Activated CD4-positive, alpha-beta memory T cell treated with anti-CD3 and anti-CD28 coated beads, Interleukin-2, amount 10 ng/mL, durations not matched to agents 7 days and 5 days (primary cell): ENCODE measurements at regions of chr10 and their contacts with region 1.

Region 1: GRCh38 chr10:101840741-101841453 is 2.7 kb downstream of the KCNIP2 start:
- DNase-seq: peak; percentile 80
- H3K4me3 Mint-ChIP-seq: peak overlapping the region; percentile 78
- H3K27ac Mint-ChIP-seq: peak overlapping the region; percentile 38
- H3K4me1 Mint-ChIP-seq: peaks cover 42% of the 10 kb centered on the region
- H3K27me3 Mint-ChIP-seq: peaks cover 19% of the 10 kb centered on the region

Region 2: GRCh38 chr10:101830322-101831168 is 10.4 kb before region 1 on chr10:
- CTCF ChIA-PET with region 1: interaction called, 28 read pairs
- POLR2A ChIA-PET with region 1: interaction called, 5 read pairs
- DNase-seq: peak; percentile 90
- H3K4me3 Mint-ChIP-seq: peak overlapping the region; percentile 76
- H3K27ac Mint-ChIP-seq: peak overlapping the region; percentile 87
- H3K4me1 Mint-ChIP-seq: peaks cover 56% of the 10 kb centered on the region
- H3K27me3 Mint-ChIP-seq: no peaks in the 10 kb centered on the region

Region 3: GRCh38 chr10:101889256-101890210 is 48.6 kb after region 1 on chr10:
- CTCF ChIA-PET with region 1: interaction called, 55 read pairs
- POLR2A ChIA-PET with region 1: no interaction called
- DNase-seq: peak; percentile 74
- H3K4me3 Mint-ChIP-seq: no peak overlapping the region
- H3K27ac Mint-ChIP-seq: no peak overlapping the region
- H3K4me1 Mint-ChIP-seq: peaks cover 14% of the 10 kb centered on the region
- H3K27me3 Mint-ChIP-seq: no peaks in the 10 kb centered on the region

Region 4: DNA sequence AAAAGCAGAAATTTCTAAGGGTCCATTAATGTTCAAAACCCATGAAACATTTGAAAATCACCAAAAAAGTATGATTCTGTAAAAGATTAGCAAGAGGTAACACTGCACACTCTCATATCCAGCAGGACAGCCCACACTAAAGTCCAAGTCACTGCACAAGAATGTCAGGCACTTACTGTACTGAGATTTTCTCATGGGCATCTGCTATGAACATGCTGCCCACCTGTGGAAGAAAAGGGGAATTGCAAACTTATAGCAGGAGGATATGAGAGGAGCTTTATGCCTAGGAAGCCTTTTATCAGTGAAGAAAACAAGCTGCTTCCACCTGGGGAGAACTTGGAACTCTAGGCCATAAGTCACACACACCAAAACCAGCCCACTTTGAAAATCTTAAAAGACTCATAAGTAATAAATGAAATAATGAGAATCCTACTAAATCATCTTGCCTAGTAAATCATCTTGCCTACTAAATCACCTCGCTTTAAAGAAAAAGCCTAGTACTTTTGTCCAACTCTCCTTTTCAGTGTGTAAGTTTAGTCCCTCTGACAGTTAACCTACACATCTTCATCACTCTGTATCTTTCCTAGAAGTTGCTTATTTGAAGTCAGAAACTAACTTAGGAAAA is 169.0 kb after region 1 on chr10:
- CTCF ChIA-PET with region 1: interaction called, 181 read pairs
- POLR2A ChIA-PET with region 1: interaction called, 15 read pairs
- DNase-seq: peak; percentile 42
- H3K4me3 Mint-ChIP-seq: no peak overlapping the region
- H3K27ac Mint-ChIP-seq: no peak overlapping the region
- H3K4me1 Mint-ChIP-seq: no peaks in the 10 kb centered on the region
- H3K27me3 Mint-ChIP-seq: no peaks in the 10 kb centered on the region

Region 5: GRCh38 chr10:102064868-102065560 is 224.1 kb after region 1 on chr10 and contains the start of gene HPS6:
- CTCF ChIA-PET with region 1: interaction called, 14 read pairs
- POLR2A ChIA-PET with region 1: interaction called, 4 read pairs
- DNase-seq: peak; percentile 92
- H3K4me3 Mint-ChIP-seq: peak within 1 kb of the TSS; percentile 84
- H3K27ac Mint-ChIP-seq: peak within 1 kb of the TSS; percentile 83
- H3K4me1 Mint-ChIP-seq: peaks cover 32% of the 10 kb centered on the region
- H3K27me3 Mint-ChIP-seq: no peaks in the 10 kb centered on the region
- total RNA-seq, gene HPS6: 24.7 to 25.7 TPM